Activated naive CD4-positive, alpha-beta T cell treated with anti-CD3 and anti-CD28 coated beads for 36 hours (primary cell): ENCODE measurements at regions of chr10 and their contacts with region 1.

Region 1: DNA sequence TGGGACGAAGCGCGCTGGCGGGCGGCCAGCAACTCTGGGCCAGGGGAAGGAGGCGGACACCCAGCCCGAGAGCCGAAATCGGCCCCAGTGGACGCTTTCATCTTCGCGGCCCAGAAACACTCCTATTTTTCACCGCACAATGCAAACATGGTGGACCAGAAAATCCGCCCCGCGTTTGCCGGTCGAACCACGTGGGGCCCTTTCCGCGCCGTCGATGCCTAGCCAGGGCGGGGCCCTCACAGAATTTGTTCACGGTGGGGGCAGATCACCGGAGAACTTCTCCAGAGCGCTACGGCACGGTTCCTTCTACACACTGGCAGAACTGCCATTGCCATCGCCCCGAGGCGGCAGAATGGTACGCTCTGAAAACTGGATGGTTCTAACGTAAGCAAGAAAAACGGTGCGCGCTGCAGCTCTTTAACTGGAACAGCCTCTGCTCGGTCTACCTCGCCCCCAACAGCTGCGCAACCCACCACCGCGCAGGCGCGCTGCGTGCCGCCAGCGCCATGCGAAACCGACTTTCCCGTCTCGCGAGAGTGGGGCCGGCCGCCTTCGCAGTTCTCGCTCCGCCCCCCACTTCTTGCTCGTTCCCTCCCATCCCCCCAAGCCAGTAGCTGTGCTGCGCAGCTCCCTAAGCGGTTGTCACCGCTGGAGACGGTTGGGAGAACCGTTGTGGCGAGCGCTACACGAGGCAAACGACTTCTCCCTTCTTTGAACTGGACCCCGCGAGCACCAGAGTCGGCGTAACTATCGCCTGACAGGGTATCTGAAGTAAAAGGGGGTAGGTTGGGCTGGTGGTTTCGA is at the start of gene HNRNPH3:
- DNase-seq: peak; percentile 99
- H3K4me3 Mint-ChIP-seq: peak within 1 kb of the TSS; percentile 100
- H3K27ac Mint-ChIP-seq: peak within 1 kb of the TSS; percentile 100
- H3K4me1 Mint-ChIP-seq: peaks cover 40% of the 10 kb centered on the region
- H3K27me3 Mint-ChIP-seq: no peaks in the 10 kb centered on the region
- total RNA-seq, gene HNRNPH3: 145 to 150 TPM

Region 2: GRCh38 chr10:67849331-67850011 is 482.2 kb before region 1 on chr10:
- CTCF ChIA-PET with region 1: no interaction called
- intact Hi-C with region 1: loop called (anchors 1 kb)
- DNase-seq: peak; percentile 98
- H3K4me3 Mint-ChIP-seq: peak overlapping the region; percentile 97
- H3K27ac Mint-ChIP-seq: peak overlapping the region; percentile 98
- H3K4me1 Mint-ChIP-seq: peaks cover 8% of the 10 kb centered on the region
- H3K27me3 Mint-ChIP-seq: no peaks in the 10 kb centered on the region

Region 3: GRCh38 chr10:68074775-68075549 is 256.7 kb before region 1 on chr10 and contains the start of gene HERC4:
- CTCF ChIA-PET with region 1: interaction called, 3 read pairs
- intact Hi-C with region 1: loop called (anchors 1 kb)
- DNase-seq: peak; percentile 92
- H3K4me3 Mint-ChIP-seq: peak within 1 kb of the TSS; percentile 97
- H3K27ac Mint-ChIP-seq: peak within 1 kb of the TSS; percentile 91
- H3K4me1 Mint-ChIP-seq: peaks cover 33% of the 10 kb centered on the region
- H3K27me3 Mint-ChIP-seq: no peaks in the 10 kb centered on the region
- total RNA-seq, gene HERC4: 42.2 to 45.0 TPM

Region 4: DNA sequence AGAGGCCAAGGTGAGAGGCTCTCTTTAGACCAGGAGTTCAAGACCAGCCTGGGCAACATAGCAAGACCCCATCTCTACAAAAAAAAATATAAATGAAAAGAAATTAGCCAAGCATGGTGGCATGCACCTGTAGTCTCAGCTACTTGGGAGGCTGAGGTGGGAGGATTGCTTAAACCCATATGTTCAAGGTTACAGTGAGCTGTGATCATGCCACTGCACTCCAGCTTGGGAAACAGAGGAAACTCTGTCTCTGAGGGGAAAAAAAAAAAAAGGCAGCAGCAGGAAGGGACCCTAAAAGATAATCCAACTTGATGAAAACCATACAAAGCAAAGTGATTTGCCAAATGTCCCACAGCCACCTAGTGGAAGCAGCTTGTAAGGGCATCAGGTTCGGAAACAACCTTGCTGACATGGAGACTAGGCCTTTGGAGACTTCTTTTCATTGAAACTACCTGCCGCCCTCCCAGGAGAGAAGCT is 16.6 kb after region 1 on chr10:
- CTCF ChIA-PET with region 1: interaction called, 12 read pairs
- intact Hi-C with region 1: loop called (anchors 1 kb)
- DNase-seq: peak; percentile 63
- H3K4me3 Mint-ChIP-seq: no peak overlapping the region
- H3K27ac Mint-ChIP-seq: no peak overlapping the region
- H3K4me1 Mint-ChIP-seq: peaks cover 10% of the 10 kb centered on the region
- H3K27me3 Mint-ChIP-seq: no peaks in the 10 kb centered on the region

Region 5: DNA sequence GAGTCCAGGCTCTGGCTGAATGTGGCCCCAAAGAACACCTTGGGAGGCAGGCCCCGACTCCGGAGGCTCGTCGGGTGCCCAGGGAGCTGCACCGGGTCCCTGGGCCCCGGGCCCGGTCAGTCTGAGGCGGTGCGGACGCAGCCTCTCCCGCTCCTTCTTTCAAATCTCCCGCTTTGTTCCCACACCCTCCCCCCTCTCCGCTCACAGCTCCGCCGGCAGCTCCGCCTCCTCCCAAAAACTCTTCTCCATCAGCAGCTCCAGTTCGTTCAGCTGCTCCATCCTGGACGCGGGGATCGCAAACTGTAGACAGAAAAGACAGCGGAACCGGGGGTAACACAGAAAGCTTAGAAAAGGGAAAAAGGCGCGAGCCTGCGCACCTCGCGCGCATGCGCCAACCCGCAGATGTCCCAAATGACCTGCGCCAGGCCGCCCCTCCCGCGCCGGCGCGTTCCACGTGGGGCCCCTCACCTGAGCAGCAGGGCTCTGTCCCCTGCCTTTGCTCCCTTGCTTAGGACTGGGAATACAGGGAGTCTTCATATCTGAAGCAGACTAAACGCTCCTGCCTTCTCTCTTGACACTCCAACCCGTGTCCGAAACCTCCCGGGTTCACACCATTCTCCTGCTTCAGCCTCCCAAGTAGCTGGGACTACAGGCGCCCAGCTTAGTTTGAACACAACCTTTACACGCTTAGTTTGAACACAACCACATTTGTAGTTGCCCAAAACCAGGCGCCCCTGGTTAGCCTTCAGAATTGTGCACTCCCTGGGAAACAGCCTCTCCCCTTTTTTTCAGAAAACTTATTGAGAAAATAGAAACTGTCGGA is 140.1 kb after region 1 on chr10 and contains the start of gene DNA2:
- CTCF ChIA-PET with region 1: no interaction called
- intact Hi-C with region 1: loop called (anchors 2 kb)
- DNase-seq: peak; percentile 81
- H3K4me3 Mint-ChIP-seq: peak within 1 kb of the TSS; percentile 96
- H3K27ac Mint-ChIP-seq: peak within 1 kb of the TSS; percentile 90
- H3K4me1 Mint-ChIP-seq: peaks cover 20% of the 10 kb centered on the region
- H3K27me3 Mint-ChIP-seq: no peaks in the 10 kb centered on the region
- total RNA-seq, gene DNA2: 50.2 to 51.4 TPM

Region 6: DNA sequence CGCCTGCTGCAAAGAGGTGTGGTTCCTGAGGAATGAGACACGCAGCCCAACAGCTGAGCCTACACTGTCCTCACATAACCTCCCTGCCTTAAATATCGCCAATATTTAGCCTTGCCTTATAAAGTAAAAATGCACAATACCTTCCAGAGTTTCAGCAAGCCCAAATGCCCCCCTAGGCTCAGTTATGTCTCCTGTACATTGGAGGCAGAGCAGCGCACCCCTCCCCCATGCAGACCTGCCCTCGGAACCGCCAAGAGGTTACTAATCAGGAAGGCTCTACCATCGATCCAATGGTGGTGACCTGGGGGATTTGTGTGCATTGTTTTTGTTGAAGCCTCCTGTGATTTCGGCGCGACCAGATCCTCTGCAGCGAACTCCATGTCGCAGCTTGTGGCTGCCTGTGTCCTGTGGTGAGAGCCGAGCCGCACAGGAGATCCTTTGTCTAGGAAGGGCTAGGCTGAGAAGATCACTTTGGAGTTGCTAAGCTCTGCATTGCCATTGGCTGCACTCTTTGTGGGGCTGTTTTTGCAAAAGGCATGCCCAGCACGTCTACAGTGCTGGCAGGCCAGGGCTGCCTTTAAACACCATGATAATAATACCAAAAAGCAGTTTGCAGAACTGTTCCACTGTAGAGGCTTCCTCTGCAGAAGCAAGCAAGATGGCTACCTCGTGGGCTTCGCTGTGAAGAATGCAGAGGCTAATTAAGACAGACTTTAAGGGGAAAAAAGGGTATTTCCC is 268.6 kb after region 1 on chr10:
- CTCF ChIA-PET with region 1: no interaction called
- intact Hi-C with region 1: loop called (anchors 1 kb)
- DNase-seq: peak; percentile 64
- H3K4me3 Mint-ChIP-seq: peak overlapping the region; percentile 83
- H3K27ac Mint-ChIP-seq: peak overlapping the region; percentile 84
- H3K4me1 Mint-ChIP-seq: peaks cover 28% of the 10 kb centered on the region
- H3K27me3 Mint-ChIP-seq: no peaks in the 10 kb centered on the region